Ascending aorta (tissue), 2 donors: ENCODE measurements at regions of chr1 and their contacts with region 1.

Region 1: DNA sequence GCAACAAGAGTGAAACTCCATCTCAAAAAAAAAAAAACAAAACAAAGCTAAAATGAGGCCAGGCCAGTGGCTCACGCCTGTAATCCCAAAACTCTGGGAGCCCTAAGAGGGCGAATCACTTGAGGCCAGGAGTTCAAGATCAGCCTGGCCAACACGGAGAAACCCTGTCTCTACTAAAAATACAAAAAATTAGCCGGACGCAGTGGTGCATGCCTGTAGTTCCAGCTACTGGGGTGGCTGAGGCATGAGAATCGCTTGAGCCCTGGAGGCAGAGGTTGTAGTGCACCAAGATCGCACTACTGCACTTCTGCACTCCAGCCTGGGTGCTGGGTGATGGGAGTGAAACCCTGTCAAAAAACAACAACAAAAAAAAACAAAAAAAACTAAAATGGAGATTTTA is 191.2 kb upstream of the SGIP1 start:
- DNase-seq: no peak
- H3K4me3 ChIP-seq: no peak overlapping the region
- H3K27ac ChIP-seq: no peak overlapping the region
- H3K4me1 ChIP-seq: no peaks in the 10 kb centered on the region
- H3K27me3 ChIP-seq: no peaks in the 10 kb centered on the region
- CTCF ChIP-seq: no peak

Region 2: GRCh38 chr1:66360285-66360724 is 17.6 kb after region 1 on chr1:
- intact Hi-C with region 1: loop called (anchors 2 kb)
- DNase-seq: no peak
- H3K4me3 ChIP-seq: no peak overlapping the region
- H3K27ac ChIP-seq: no peak overlapping the region
- H3K4me1 ChIP-seq: no peaks in the 10 kb centered on the region
- H3K27me3 ChIP-seq: no peaks in the 10 kb centered on the region
- CTCF ChIP-seq: no peak